ENCODE measurements at regions of chr22 and their contacts with region 1.

Region 1: DNA sequence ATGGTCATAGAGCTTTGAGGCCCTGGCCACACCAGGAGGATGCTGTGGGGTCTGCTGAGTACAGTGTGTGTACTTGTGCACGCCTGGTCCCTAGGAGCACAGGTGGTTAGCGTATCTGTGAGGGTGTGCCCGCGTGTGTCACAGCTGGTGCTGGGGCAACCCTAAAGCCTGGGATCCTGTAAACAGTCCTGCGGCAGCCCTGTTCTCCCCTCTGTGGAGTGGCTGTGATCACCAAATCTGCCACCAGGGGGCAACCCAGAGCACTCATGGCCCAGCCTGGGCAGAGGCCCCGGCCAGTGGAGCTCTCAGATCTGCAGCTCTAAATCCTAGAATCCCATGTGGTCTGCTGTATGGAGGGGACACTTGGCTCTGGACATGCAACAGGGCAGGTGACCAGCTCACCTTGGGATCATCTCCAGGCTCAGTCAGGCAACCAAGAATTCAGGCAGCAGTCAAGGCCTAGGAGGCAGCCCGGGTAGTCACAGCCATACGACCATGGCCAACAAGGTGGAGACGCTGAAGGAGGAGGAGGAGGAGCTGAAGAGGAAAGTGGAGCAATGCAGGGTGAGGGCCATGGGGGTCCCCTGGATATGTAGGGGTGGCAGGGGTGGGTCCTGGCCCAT is 3.9 kb downstream of the SH3BP1 start:
- DNase-seq: peak; percentile 93
- H3K4me3 Mint-ChIP-seq: peak overlapping the region; percentile 49
- H3K27ac Mint-ChIP-seq: peak overlapping the region; percentile 83
- H3K4me1 Mint-ChIP-seq: peaks cover 40% of the 10 kb centered on the region
- H3K27me3 Mint-ChIP-seq: no peaks in the 10 kb centered on the region

Region 2: GRCh38 chr22:37300551-37301017 is 342.8 kb before region 1 on chr22:
- CTCF ChIA-PET with region 1: no interaction called
- DNase-seq: peak; percentile 75
- H3K4me3 Mint-ChIP-seq: peak overlapping the region; percentile 70
- H3K27ac Mint-ChIP-seq: peak overlapping the region; percentile 96
- H3K4me1 Mint-ChIP-seq: peaks cover 94% of the 10 kb centered on the region
- H3K27me3 Mint-ChIP-seq: no peaks in the 10 kb centered on the region

Region 3: DNA sequence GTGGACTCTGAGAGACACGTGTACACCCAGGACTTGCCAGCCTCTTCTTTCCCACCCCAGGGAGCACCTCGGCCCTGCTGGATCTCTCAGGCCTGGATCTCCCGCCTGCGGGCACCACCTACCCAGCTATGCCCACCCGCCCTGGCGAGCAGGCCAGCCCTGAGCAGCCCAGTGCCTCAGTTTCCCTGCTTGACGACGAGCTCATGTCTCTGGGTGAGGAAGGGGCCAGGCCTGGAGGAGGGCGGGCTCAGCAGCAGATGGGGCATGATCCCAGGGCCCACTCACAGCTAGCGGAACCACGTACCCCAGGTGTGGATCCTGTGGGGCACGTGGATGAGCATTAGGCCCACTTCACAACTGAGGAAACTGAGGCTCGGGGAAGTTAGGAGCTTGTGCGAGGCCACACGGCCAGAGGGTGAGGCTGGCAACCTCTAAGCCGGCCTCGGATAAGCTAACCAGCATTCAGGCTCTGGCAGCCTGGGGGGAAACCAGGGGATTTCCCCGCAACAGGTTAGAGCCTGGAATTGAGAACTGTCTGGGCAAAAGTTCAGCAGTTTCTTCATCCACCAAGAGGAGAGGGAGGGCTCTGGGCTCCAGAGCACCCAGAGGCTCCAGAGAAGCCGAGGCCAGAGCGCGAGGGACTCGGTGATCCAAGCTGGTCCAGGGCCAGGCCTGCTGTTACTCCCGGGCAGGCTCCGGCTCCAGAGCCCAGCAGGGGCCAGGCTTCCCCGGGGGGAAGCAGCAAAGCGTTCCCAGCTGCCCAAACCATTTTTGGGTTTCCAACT is 17.4 kb before region 1 on chr22:
- CTCF ChIA-PET with region 1: interaction called, 57 read pairs
- DNase-seq: no peak
- H3K4me3 Mint-ChIP-seq: no peak overlapping the region
- H3K27ac Mint-ChIP-seq: peak overlapping the region; percentile 86
- H3K4me1 Mint-ChIP-seq: peaks cover 52% of the 10 kb centered on the region
- H3K27me3 Mint-ChIP-seq: no peaks in the 10 kb centered on the region

Region 4: GRCh38 chr22:37658133-37659065 is 15.1 kb after region 1 on chr22 and contains the start of gene PDXP:
- CTCF ChIA-PET with region 1: interaction called, 83 read pairs
- DNase-seq: peak; percentile 99
- H3K4me3 Mint-ChIP-seq: peak within 1 kb of the TSS; percentile 81
- H3K27ac Mint-ChIP-seq: peak within 1 kb of the TSS; percentile 90
- H3K4me1 Mint-ChIP-seq: peaks cover 40% of the 10 kb centered on the region
- H3K27me3 Mint-ChIP-seq: no peaks in the 10 kb centered on the region

Region 5: GRCh38 chr22:37696657-37697537 is 53.6 kb after region 1 on chr22 and contains the start of gene TRIOBP:
- CTCF ChIA-PET with region 1: interaction called, 10 read pairs
- DNase-seq: peak; percentile 96
- H3K4me3 Mint-ChIP-seq: peak within 1 kb of the TSS; percentile 71
- H3K27ac Mint-ChIP-seq: peak within 1 kb of the TSS; percentile 67
- H3K4me1 Mint-ChIP-seq: peaks cover 15% of the 10 kb centered on the region
- H3K27me3 Mint-ChIP-seq: no peaks in the 10 kb centered on the region

Measured in activated naive CD4-positive, alpha-beta T cell treated with anti-CD3 and anti-CD28 coated beads, Interleukin-2, amount 10 ng/mL, durations not matched to agents 7 days and 5 days (primary cell).